ENCODE measurements at regions of chr13 and their contacts with region 1.

Region 1: DNA sequence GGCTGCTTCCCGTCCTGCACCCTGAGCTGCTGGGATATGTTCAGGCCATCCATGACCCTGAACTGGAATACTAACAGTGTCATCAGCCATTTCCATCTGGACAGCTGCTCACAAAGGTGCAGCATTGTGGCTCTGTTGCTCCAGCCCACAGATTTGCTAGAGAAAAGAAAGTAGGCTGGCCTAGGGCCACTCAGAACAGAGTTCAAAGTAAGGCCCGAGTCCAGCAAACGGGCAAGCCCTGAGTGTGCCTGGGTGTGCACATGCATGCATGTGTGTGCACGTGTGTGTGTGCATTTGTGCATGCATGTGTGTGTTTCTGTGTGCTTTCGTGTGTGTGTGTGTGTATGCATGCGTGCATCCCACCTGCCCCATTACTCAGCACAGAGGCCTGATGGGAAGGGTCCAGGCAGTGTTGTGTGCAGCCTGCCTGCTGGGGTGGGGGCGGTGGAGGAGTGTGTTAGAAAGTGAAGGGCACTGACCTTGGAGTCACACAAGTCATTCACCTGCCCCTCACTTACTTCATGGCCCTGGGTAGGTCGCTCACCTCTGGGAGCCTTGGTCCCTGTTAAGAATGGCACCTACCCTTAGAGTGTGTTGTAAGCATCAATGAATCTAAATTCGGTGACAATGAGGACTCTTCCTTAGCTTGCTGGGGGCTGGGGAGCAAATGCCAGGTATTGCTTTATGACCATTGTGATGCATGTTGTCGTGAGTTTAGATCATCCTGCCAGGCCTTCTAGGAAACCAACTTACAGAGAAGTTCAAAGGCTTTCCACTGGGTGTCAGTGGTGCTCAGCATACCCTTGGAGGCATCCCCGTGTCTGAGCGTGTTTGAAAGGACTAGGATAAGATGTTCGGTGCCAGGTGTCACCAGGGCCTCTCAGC is 53.2 kb downstream of the GPR12 start:
- DNase-seq: peak; percentile 44
- H3K4me3 ChIP-seq: no peak overlapping the region
- H3K27ac ChIP-seq: no peak overlapping the region
- H3K4me1 ChIP-seq: no peaks in the 10 kb centered on the region
- H3K27me3 ChIP-seq: peaks cover 3% of the 10 kb centered on the region
- CTCF ChIP-seq: peak; percentile 59 to 88

Region 2: GRCh38 chr13:26872525-26873385 is 165.4 kb after region 1 on chr13:
- CTCF ChIA-PET with region 1: no interaction called
- dilution Hi-C with region 1: no loop called
- in situ Hi-C with region 1: loop called (anchors 5 to 10 kb)
- intact Hi-C with region 1: loop called (anchors 1 kb)
- DNase-seq: peak; percentile 24
- H3K4me3 ChIP-seq: no peak overlapping the region
- H3K27ac ChIP-seq: no peak overlapping the region
- H3K4me1 ChIP-seq: no peaks in the 10 kb centered on the region
- H3K27me3 ChIP-seq: no peaks in the 10 kb centered on the region
- CTCF ChIP-seq: peak; percentile 84 to 93

Region 3: GRCh38 chr13:26949701-26950502 is 242.5 kb after region 1 on chr13:
- CTCF ChIA-PET with region 1: no interaction called
- dilution Hi-C with region 1: no loop called
- in situ Hi-C with region 1: no loop called
- intact Hi-C with region 1: no loop called
- DNase-seq: no peak
- H3K4me3 ChIP-seq: no peak overlapping the region
- H3K27ac ChIP-seq: no peak overlapping the region
- H3K4me1 ChIP-seq: no peaks in the 10 kb centered on the region
- H3K27me3 ChIP-seq: no peaks in the 10 kb centered on the region
- CTCF ChIP-seq: no peak

Measured in mammary epithelial cell (primary cell).